Mammary epithelial cell (primary cell): ENCODE measurements at regions of chr3 and their contacts with region 1.

Region 1: GRCh38 chr3:65575373-65575840 is 463.3 kb downstream of the MAGI1 start:
- DNase-seq: peak; percentile 89
- H3K4me3 ChIP-seq: no peak overlapping the region
- H3K27ac ChIP-seq: peak overlapping the region; percentile 77
- H3K4me1 ChIP-seq: peaks cover 19% of the 10 kb centered on the region
- H3K27me3 ChIP-seq: no peaks in the 10 kb centered on the region
- CTCF ChIP-seq: no peak

Region 2: DNA sequence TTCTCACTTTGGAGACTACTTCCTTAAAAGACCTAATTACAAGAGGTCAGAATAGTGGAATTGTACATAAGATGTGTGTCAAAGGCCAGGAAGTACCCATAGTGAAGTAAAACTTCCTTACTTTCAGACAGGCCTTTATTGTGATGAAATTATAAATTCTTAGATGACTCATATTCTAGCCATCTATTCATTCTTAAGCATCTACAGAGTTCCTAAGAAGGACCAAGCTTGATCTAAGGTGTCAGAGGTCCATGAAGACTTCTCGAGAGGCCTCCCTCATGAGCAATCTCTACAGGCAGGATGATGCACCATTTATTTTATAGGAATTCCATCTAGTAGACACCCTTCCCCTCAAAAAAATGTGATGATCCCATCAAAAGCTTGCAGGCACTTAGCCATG is 30.0 kb before region 1 on chr3:
- CTCF ChIA-PET with region 1: no interaction called
- dilution Hi-C with region 1: no loop called
- in situ Hi-C with region 1: no loop called
- intact Hi-C with region 1: no loop called
- DNase-seq: no peak
- H3K4me3 ChIP-seq: no peak overlapping the region
- H3K27ac ChIP-seq: no peak overlapping the region
- H3K4me1 ChIP-seq: peaks cover 3% of the 10 kb centered on the region
- H3K27me3 ChIP-seq: peaks cover 17% of the 10 kb centered on the region
- CTCF ChIP-seq: no peak

Region 3: DNA sequence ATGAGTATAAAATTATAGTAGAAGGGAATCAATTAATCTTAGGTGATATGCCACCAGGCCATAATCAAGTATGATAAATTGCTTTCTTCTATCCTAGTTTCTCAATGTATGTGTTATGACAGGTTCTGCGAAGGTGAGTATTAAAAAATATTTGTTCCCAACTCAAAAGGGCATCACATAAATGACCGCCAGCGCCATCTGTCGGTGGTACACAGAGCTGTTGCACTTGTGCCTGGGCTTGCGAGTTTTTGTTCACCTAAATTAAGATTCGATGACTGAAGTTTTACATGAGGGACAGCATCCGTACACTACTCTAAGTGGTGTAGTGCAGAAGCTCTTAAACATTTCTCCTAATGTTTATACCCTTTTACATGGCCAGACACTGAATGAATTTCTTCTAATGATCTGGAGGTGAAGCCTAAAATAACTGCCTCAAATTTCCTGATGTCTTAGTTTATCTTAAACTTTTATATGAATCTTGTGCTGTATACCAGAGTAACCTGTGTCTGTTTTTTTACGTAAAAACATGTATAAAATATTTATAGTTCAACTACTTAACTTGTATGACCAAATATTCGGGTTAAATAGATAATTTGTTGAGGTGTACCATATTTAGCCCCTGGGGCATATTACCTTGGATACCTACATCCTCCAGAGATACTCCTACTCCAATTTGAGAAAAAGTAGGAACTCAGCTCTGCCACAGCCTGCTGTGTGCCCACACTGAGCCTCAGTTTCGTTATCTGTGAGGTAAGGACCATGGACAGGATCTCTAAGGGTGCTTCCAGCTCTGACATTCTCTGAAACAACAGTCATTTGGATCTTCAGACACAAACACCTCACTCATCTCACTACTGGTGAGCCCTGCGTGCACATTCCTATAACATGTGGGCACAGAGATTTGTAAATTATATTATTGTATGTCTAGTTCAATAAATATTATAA is 97.7 kb after region 1 on chr3:
- CTCF ChIA-PET with region 1: no interaction called
- dilution Hi-C with region 1: loop called (anchors 5 kb)
- in situ Hi-C with region 1: no loop called
- intact Hi-C with region 1: loop called (anchors 2 kb)
- DNase-seq: peak; percentile 30
- H3K4me3 ChIP-seq: no peak overlapping the region
- H3K27ac ChIP-seq: no peak overlapping the region
- H3K4me1 ChIP-seq: peaks cover 6% of the 10 kb centered on the region
- H3K27me3 ChIP-seq: no peaks in the 10 kb centered on the region
- CTCF ChIP-seq: peak; percentile 83 to 84